Activated CD4-positive, alpha-beta memory T cell treated with anti-CD3 and anti-CD28 coated beads for 36 hours (primary cell): ENCODE measurements at regions of chr11 and their contacts with region 1.

Region 1: DNA sequence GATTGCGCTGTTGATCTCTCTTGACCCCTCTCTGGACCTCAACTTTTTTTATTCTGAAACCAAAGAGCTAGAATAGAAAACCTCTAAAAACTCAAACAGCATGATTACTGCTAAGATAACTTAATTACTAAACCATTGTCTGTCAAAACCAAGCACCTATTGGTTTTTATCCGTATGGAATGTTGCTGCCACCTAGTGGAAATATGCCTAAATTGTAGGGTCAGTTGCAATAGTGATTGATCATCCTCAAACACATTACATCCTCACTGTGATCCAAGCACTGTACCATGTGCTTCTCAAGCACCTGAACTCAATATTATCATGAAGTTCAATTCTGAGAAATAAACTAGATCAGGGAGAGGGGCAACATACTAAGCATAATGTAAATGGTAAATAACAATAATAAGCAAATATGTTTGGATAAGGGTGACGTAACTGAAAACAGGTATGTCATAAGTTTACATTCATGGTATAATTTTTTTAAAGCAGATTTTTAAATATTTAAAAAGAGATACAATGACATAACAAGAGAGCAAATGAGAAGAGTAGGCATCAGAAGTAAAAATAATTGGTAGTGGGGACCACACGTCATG is 3.8 kb upstream of the OR5A2 start:
- DNase-seq: no peak
- H3K4me3 Mint-ChIP-seq: no peak overlapping the region
- H3K27ac Mint-ChIP-seq: no peak overlapping the region
- H3K4me1 Mint-ChIP-seq: no peaks in the 10 kb centered on the region
- H3K27me3 Mint-ChIP-seq: peaks cover 1% of the 10 kb centered on the region

Region 2: DNA sequence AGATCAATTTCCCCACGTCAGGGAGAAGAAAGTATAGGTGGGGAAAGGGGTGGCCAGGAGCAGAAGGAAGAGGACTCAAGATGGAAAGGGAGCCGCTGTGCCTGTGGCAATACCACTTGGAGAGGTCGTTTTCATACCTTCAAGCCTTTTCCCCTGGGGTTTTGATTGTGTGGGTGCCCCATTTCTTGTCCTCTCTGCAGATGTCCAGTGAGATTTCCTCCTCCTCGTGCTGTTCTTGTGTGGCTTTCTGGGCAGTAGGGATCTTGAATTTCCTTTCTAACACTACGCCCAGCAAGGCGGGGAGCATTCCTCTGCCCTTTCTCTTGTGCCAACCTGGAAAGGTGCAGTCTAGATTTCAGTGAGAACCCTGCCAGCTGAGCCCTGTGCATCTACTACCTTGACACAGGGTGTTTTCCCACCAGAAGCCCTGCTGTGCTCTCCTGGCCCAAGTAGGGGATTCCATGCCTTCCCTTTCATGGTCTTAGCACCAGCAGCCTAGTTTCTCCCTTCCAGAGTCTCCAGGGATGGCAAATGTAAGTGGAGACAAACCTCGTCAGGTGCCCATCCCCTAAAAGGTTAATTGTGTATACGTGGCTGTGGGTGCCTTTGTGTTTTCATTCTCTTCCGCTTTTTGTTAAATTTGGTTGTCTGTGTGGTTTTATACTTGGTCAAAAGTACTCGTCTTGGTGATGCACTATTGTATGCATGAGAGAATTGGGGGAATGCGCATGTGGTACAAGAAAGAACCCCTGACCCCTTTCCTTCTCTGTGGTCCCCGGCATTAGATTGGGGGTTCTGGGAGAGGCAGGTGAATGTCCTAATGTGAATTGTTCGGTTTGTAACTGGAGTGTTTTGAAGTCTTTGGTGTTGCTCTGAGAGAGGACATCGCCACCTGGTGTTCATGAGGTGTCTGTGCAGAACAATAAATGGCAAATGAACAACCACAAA is 145.9 kb before region 1 on chr11:
- CTCF ChIA-PET with region 1: interaction called, 3 read pairs
- POLR2A ChIA-PET with region 1: no interaction called
- intact Hi-C with region 1: loop called (anchors 1 kb)
- DNase-seq: peak; percentile 58
- H3K4me3 Mint-ChIP-seq: peak overlapping the region; percentile 42
- H3K27ac Mint-ChIP-seq: no peak overlapping the region
- H3K4me1 Mint-ChIP-seq: peaks cover 14% of the 10 kb centered on the region
- H3K27me3 Mint-ChIP-seq: peaks cover 5% of the 10 kb centered on the region

Region 3: GRCh38 chr11:59418156-59418555 is 11.9 kb before region 1 on chr11:
- CTCF ChIA-PET with region 1: interaction called, 14 read pairs
- POLR2A ChIA-PET with region 1: no interaction called
- intact Hi-C with region 1: no loop called
- DNase-seq: no peak
- H3K4me3 Mint-ChIP-seq: no peak overlapping the region
- H3K27ac Mint-ChIP-seq: no peak overlapping the region
- H3K4me1 Mint-ChIP-seq: no peaks in the 10 kb centered on the region
- H3K27me3 Mint-ChIP-seq: peaks cover 21% of the 10 kb centered on the region